ENCODE measurements at regions of chr2 and their contacts with region 1.

Region 1: DNA sequence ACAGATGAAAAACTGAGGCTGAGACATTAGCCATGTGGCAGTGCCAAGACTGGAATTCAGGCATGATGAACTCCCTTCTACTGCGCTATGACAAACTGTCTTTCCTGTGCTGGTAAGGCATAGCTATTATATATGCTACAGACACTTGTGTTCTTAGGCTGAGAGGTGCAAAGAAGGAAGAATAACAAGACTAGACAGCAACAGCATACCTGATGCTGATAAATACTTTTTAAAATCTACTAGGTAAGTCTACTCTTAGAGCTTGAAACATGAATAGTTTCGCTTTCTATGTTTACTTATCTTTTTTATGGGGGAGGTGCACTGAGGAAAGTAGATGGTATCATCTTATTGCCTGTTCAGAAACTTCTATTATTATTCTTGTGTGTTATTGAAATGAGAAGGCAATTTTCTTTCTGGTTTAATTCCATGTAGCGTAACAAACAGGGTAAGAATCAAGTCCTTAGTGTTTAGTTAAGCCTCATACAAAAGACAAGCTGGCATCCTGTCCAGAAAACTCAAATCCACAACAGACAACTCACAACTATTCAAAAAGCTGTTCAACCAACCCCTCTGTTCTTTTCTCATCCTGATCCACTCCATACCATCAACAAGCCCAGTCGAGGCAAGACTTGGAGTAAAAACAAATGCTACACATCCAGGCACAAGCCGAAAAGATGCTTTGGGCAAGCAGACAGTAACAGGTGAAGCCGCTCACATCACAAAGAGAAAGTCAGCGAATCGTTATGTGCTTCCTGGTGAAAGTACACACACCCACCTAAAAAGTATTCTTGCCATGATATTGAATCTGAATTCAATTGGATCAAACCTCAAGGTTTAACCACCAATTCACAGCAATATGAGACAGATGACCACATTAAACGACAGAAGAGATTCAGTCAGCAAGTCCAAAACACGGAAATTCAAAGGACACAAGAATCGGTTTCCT is 1.5 kb downstream of the TTC32 start:
- DNase-seq: peak; percentile 46

Region 2: GRCh38 chr2:18546567-18546966 is 1353.7 kb before region 1 on chr2:
- in situ Hi-C with region 1: loop called (anchors 25 kb)
- DNase-seq: no peak